OCI-LY7 (cell line): ENCODE measurements at regions of chr6 and their contacts with region 1.

Region 1: DNA sequence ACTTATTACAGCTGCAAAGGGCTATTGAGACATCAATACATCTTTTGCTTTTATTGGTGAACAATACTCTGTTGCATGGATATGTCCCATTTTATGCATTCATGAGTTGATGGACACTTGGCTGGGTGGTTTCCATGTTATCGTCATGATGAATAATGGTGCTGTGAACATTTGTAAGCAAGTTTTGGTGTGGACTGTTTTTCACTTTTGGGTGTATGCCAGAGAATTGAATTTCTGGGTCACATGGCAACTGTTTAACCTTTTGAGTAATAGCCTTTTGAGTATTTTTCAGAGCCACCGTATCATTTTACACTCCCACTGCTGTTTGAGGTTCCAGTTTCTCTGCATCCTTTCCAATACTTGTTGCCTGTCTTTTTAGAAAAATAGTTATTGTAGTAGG is 107.0 kb downstream of the JARID2 start:
- DNase-seq: no peak
- H3K4me3 ChIP-seq: no peak overlapping the region
- H3K27ac ChIP-seq: no peak overlapping the region
- H3K4me1 ChIP-seq: peaks cover 14% of the 10 kb centered on the region
- CTCF ChIP-seq: no peak

Region 2: DNA sequence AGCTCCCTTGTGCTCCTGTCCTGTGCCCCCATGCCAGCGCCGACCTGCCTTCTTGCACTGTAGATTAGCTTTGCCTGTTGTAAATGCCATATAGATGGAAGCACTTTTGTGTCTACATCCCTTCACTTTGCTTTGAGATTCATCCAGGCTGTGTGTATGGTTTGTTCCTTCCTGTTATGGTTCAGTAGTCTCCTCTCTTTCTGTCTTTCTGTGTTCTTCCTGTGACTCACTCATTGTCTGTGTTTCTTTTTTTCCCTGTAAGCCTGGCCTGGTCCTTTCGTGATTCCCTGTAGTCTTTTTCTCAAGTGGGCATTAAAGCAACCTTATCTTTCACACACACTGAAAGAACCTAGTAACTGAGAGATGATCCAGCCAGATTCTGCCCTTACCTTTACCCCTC is 40.3 kb before region 1 on chr6:
- CTCF ChIA-PET with region 1: no interaction called
- POLR2A ChIA-PET with region 1: no interaction called
- intact Hi-C with region 1: loop called (anchors 1 kb)
- DNase-seq: peak; percentile 46
- H3K4me3 ChIP-seq: peak overlapping the region; percentile 35
- H3K27ac ChIP-seq: peak overlapping the region; percentile 44
- H3K4me1 ChIP-seq: peaks cover 60% of the 10 kb centered on the region
- CTCF ChIP-seq: no peak